Thyroid gland (tissue), 4 donors: ENCODE measurements at regions of chr3 and their contacts with region 1.

Region 1: DNA sequence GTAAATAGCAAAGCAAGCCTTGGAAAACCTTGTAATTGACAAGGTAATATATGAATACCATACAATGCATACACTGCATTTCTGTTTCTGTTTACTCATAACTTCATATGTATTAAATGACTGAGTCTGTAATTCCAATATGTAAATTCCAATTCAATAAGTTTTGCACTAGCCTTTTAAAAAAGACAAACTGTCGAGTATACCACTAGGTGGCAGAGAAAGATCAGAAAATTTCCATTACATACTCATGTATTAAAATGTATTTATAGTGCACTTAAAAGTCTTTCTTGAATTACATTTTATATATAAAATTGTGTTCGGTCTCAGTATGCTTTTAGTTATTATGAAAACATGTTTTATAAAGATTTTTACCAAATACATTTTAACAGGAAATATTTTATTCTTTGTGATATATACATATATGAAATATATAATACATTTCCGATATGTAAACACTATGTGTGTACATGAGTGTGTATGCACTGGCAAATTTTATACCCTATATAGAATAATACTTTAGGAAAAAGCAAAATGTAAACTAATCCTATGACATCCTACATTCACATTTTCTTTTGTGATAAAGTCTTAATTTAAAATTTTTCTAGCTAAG is 216.8 kb downstream of the VGLL3 start:
- DNase-seq: no peak
- H3K4me3 ChIP-seq: no peak overlapping the region
- H3K27ac ChIP-seq: no peak overlapping the region
- H3K4me1 ChIP-seq: no peaks in the 10 kb centered on the region
- H3K27me3 ChIP-seq: no peaks in the 10 kb centered on the region
- CTCF ChIP-seq: peak in 3 of 6 experiments; percentile 7 to 34 (median 33)
- POLR2A ChIP-seq: no peak

Region 2: GRCh38 chr3:86594838-86595237 is 179.3 kb before region 1 on chr3:
- intact Hi-C with region 1: no loop called
- DNase-seq: no peak
- H3K4me3 ChIP-seq: no peak overlapping the region
- H3K27ac ChIP-seq: no peak overlapping the region
- H3K4me1 ChIP-seq: no peaks in the 10 kb centered on the region
- H3K27me3 ChIP-seq: no peaks in the 10 kb centered on the region
- CTCF ChIP-seq: no peak
- POLR2A ChIP-seq: no peak

Region 3: DNA sequence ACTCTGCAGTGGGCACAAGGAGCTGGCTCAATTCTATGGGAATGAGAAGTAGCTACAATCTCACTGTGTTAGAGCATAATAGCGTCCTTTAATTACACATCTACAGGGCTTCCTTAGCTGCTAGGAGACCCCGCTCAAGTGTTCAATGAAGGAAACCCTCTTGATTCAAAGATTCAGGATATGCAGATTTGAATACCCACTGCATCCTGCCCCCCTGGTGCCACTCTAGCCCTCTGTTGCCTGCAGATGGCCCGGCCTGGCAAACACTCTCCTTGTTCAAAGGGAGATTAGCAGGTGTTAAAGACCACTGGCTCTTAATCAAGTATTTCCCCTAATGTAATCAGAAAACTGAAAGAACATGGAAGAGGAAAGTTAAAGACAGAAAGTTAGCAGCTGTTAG is 139.8 kb before region 1 on chr3:
- intact Hi-C with region 1: no loop called
- DNase-seq: no peak
- H3K4me3 ChIP-seq: no peak overlapping the region
- H3K27ac ChIP-seq: no peak overlapping the region
- H3K4me1 ChIP-seq: no peaks in the 10 kb centered on the region
- H3K27me3 ChIP-seq: no peaks in the 10 kb centered on the region
- CTCF ChIP-seq: no peak
- POLR2A ChIP-seq: no peak

Region 4: GRCh38 chr3:86948840-86949239 is 174.7 kb after region 1 on chr3:
- intact Hi-C with region 1: no loop called
- DNase-seq: no peak
- H3K4me3 ChIP-seq: no peak overlapping the region
- H3K27ac ChIP-seq: no peak overlapping the region
- H3K4me1 ChIP-seq: no peaks in the 10 kb centered on the region
- H3K27me3 ChIP-seq: no peaks in the 10 kb centered on the region
- CTCF ChIP-seq: no peak
- POLR2A ChIP-seq: no peak

Region 5: GRCh38 chr3:87082796-87083440 is 308.7 kb after region 1 on chr3:
- intact Hi-C with region 1: loop called (anchors 5 kb)
- DNase-seq: no peak
- H3K4me3 ChIP-seq: no peak overlapping the region
- H3K27ac ChIP-seq: no peak overlapping the region
- H3K4me1 ChIP-seq: no peaks in the 10 kb centered on the region
- H3K27me3 ChIP-seq: no peaks in the 10 kb centered on the region
- CTCF ChIP-seq: peak in 4 of 6 experiments; percentile 27 to 52 (median 50)
- POLR2A ChIP-seq: no peak

Region 6: DNA sequence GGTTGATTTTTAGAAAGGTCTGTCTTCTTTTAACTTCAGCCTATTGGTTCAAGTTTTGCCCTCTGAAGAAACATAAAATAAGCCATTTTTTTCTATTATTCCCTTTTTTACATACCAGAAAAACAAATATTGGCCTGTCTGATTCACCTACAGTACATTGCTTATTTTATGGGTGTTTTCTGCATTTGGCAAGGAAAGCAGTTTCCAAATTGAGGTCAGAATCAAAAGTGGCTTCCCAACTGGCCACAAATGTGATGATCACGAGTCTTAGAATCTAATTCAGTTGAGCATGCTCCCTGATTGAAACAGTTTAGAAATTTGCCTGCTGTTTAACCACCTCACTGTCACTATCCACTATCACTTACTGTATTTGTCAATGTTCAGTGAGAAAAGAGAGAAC is 346.0 kb after region 1 on chr3:
- intact Hi-C with region 1: no loop called
- DNase-seq: no peak
- H3K4me3 ChIP-seq: no peak overlapping the region
- H3K27ac ChIP-seq: no peak overlapping the region
- H3K4me1 ChIP-seq: no peaks in the 10 kb centered on the region
- H3K27me3 ChIP-seq: no peaks in the 10 kb centered on the region
- CTCF ChIP-seq: no peak
- POLR2A ChIP-seq: no peak

Region 7: GRCh38 chr3:87167628-87168456 is 393.7 kb after region 1 on chr3:
- intact Hi-C with region 1: loop called (anchors 5 kb)
- DNase-seq: peak; percentile 5 to 14
- H3K4me3 ChIP-seq: peak overlapping the region in 1 of 3 donors; percentile 14
- H3K27ac ChIP-seq: no peak overlapping the region
- H3K4me1 ChIP-seq: no peaks in the 10 kb centered on the region
- H3K27me3 ChIP-seq: no peaks in the 10 kb centered on the region
- CTCF ChIP-seq: peak; percentile 18 to 65 (median 54)
- POLR2A ChIP-seq: no peak